Thyroid gland (tissue), 4 donors: ENCODE measurements at regions of chr1 and their contacts with region 1.

Region 1: GRCh38 chr1:52296345-52296744 is 69.7 kb downstream of the CC2D1B start:
- DNase-seq: no peak
- H3K4me3 ChIP-seq: no peak overlapping the region
- H3K27ac ChIP-seq: no peak overlapping the region
- H3K4me1 ChIP-seq: no peaks in the 10 kb centered on the region
- H3K27me3 ChIP-seq: no peaks in the 10 kb centered on the region
- CTCF ChIP-seq: peak; percentile 44 to 83 (median 68)
- POLR2A ChIP-seq: no peak

Region 2: DNA sequence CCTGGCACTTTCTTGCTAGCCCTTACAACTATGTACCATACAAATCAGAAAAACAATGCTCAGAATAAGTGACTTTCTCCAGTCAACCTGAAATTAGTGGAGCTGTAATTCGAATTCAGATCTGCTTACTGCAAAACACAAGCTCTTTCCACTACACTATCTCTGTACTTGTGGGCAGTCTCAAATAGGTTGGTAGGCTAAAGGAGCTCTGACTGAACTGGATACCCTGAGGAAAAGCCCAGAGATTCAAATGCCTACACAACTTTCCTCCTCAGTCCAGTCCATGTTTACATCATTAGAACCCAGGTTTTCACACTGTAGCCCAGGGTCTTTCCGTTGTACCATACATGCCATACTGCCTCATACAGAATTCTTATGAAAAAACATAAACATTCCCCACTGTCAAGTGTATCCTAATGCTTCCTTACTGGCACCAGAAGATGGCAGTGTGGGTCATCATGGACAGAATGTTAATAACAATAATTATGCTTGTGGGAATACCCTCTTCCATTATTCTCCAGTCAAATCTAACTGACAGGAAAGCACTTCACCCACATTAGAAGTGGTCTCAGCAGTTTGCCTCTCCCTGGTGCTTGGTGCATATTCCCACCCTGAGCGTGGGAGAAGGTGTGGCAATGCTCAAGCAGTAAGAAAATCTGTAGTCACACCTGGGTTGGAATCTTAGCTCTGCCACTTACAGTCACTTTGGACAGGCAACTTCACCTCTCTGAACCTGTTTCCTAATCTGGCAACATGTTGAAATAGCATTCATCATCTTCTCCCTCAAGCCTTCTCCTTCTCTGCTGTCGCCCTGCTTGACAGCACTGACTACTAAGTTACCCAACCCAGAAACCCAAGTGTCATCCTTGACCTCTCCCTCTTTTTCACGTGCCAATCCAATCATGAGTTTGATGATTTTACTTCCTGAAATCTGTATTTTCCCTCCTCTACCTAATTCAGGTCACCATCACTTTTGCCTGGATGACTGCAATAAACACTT is 168.9 kb before region 1 on chr1:
- intact Hi-C with region 1: loop called (anchors 2 kb)
- DNase-seq: peak; percentile 37 to 43
- H3K4me3 ChIP-seq: no peak overlapping the region
- H3K27ac ChIP-seq: no peak overlapping the region
- H3K4me1 ChIP-seq: no peaks in the 10 kb centered on the region
- H3K27me3 ChIP-seq: no peaks in the 10 kb centered on the region
- CTCF ChIP-seq: peak; percentile 36 to 83 (median 70)
- POLR2A ChIP-seq: no peak

Region 3: GRCh38 chr1:52159033-52159789 is 137.1 kb before region 1 on chr1:
- intact Hi-C with region 1: no loop called
- DNase-seq: no peak
- H3K4me3 ChIP-seq: no peak overlapping the region
- H3K27ac ChIP-seq: no peak overlapping the region
- H3K4me1 ChIP-seq: peaks cover 0 to 1% of the 10 kb centered on the region in 2 donors
- H3K27me3 ChIP-seq: no peaks in the 10 kb centered on the region
- CTCF ChIP-seq: no peak
- POLR2A ChIP-seq: no peak

Region 4: GRCh38 chr1:52348704-52349300 is 52.5 kb after region 1 on chr1:
- intact Hi-C with region 1: no loop called
- DNase-seq: no peak
- H3K4me3 ChIP-seq: no peak overlapping the region
- H3K27ac ChIP-seq: no peak overlapping the region
- H3K4me1 ChIP-seq: no peaks in the 10 kb centered on the region
- H3K27me3 ChIP-seq: no peaks in the 10 kb centered on the region
- CTCF ChIP-seq: no peak
- POLR2A ChIP-seq: no peak